A549 (cell line): ENCODE measurements at regions of chr9 and their contacts with region 1.

Region 1: GRCh38 chr9:17810728-17811571 is 232.1 kb downstream of the SH3GL2 start:
- DNase-seq: peak; percentile 17 to 49
- ATAC-seq: peak; percentile 69 to 82; a peak in 4 of 6 replicates
- H3K4me3 ChIP-seq: no peak overlapping the region
- H3K27ac ChIP-seq: no peak overlapping the region
- H3K4me1 ChIP-seq: no peaks in the 10 kb centered on the region
- CTCF ChIP-seq: peak; percentile 93
- EP300 ChIP-seq: no peak
- POLR2A ChIP-seq: no peak
- RAD21 ChIP-seq: peak; percentile 84 to 85

Region 2: DNA sequence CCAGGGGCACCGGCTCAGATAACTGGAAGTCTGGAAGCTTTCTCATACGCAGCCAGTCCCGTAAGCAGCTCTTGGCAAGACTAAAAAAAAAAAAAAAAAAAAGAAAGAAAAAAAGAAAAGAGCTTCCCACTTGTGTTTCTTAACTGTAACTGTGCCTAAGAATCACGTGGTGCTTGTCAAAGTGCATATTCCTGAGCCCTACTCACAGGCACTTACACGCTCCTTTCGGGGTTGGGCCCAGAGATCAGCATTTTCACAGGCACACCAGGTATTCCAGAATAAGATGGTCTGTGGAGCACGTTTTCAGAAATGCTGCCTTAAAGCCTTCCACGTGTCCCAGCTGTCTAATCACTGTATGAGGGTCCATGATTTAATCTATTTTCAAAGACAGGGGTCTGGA is 254.7 kb before region 1 on chr9:
- CTCF ChIA-PET with region 1: no interaction called
- POLR2A ChIA-PET with region 1: no interaction called
- DNase-seq: no peak
- ATAC-seq: no peak
- H3K4me3 ChIP-seq: no peak overlapping the region
- H3K27ac ChIP-seq: no peak overlapping the region
- H3K4me1 ChIP-seq: no peaks in the 10 kb centered on the region
- CTCF ChIP-seq: no peak
- EP300 ChIP-seq: no peak
- POLR2A ChIP-seq: no peak
- RAD21 ChIP-seq: no peak

Region 3: GRCh38 chr9:17772223-17772622 is 38.7 kb before region 1 on chr9:
- CTCF ChIA-PET with region 1: no interaction called
- POLR2A ChIA-PET with region 1: no interaction called
- DNase-seq: no peak
- ATAC-seq: no peak
- H3K4me3 ChIP-seq: no peak overlapping the region
- H3K27ac ChIP-seq: no peak overlapping the region
- H3K4me1 ChIP-seq: no peaks in the 10 kb centered on the region
- CTCF ChIP-seq: no peak
- EP300 ChIP-seq: no peak
- POLR2A ChIP-seq: no peak
- RAD21 ChIP-seq: no peak

Region 4: DNA sequence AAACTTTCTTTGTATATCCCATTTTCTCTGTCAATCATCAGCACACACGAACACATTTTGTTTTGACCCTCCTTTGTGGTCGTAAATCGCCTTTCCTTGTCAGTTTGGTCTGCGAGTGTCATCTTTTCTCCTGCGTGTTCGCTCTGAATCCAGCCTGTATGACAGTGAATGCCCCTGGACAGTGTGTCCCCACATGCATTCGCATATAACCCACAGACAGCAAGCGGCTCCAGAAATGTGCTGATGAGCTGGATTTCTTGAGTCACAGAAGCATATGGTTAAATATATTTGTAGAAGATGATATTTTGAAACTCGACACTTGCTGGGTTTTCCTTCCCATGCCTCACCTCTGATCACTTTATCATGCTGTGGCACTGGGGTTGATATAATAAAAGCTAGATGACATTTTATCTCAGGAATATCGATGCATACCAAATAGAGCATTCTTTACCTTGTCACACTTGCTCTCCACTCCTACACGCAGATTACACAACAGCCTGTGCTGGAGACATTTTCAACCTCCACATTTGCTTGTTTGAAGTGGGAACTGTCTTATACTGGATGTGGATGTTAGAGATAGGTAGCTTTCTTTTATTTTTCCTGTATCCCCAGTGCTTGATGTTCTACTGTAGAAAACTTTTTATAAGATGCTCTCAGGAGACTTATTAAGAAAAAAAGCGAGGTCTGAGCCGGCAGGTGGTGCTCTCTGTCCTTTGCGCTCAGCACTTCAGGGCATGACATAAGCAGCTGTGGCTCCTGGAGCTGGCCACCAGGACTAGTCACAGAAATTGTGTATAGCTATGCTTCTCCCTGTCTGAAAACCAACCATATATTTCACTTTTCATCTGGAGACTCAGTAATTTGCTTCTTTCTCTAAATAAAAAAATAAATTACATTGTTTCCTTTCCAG is 17.0 kb before region 1 on chr9:
- CTCF ChIA-PET with region 1: interaction called, 19 read pairs
- POLR2A ChIA-PET with region 1: no interaction called
- DNase-seq: peak; percentile 13 to 66
- ATAC-seq: peak; percentile 96 to 97
- H3K4me3 ChIP-seq: no peak overlapping the region
- H3K27ac ChIP-seq: no peak overlapping the region
- H3K4me1 ChIP-seq: no peaks in the 10 kb centered on the region
- CTCF ChIP-seq: peak; percentile 43
- EP300 ChIP-seq: no peak
- POLR2A ChIP-seq: no peak
- RAD21 ChIP-seq: peak; percentile 32 to 44; a peak in 4 of 5 replicates

Region 5: GRCh38 chr9:17832812-17833211 is 21.9 kb after region 1 on chr9:
- CTCF ChIA-PET with region 1: interaction called, 21 read pairs
- POLR2A ChIA-PET with region 1: no interaction called
- DNase-seq: no peak
- ATAC-seq: no peak
- H3K4me3 ChIP-seq: no peak overlapping the region
- H3K27ac ChIP-seq: no peak overlapping the region
- H3K4me1 ChIP-seq: no peaks in the 10 kb centered on the region
- CTCF ChIP-seq: no peak
- EP300 ChIP-seq: no peak
- POLR2A ChIP-seq: no peak
- RAD21 ChIP-seq: no peak

Region 6: GRCh38 chr9:17837965-17838364 is 27.0 kb after region 1 on chr9:
- CTCF ChIA-PET with region 1: interaction called, 21 read pairs
- POLR2A ChIA-PET with region 1: no interaction called
- DNase-seq: peak in 1 of 2 experiments; percentile 19
- ATAC-seq: peak in 1 of 2 experiments; percentile 51; a peak in 2 of 6 replicates
- H3K4me3 ChIP-seq: no peak overlapping the region
- H3K27ac ChIP-seq: no peak overlapping the region
- H3K4me1 ChIP-seq: no peaks in the 10 kb centered on the region
- CTCF ChIP-seq: no peak
- EP300 ChIP-seq: no peak
- POLR2A ChIP-seq: no peak
- RAD21 ChIP-seq: no peak

Region 7: GRCh38 chr9:18208154-18209059 is 397.5 kb after region 1 on chr9:
- CTCF ChIA-PET with region 1: interaction called, 53 read pairs
- POLR2A ChIA-PET with region 1: no interaction called
- DNase-seq: peak; percentile 8 to 42
- ATAC-seq: peak; percentile 71 to 75; a peak in 5 of 6 replicates
- H3K4me3 ChIP-seq: no peak overlapping the region
- H3K27ac ChIP-seq: no peak overlapping the region
- H3K4me1 ChIP-seq: no peaks in the 10 kb centered on the region
- CTCF ChIP-seq: peak; percentile 37; the same call in 2 of the 3 replicates
- EP300 ChIP-seq: no peak
- POLR2A ChIP-seq: no peak
- RAD21 ChIP-seq: peak; percentile 37 to 50; a peak in 4 of 5 replicates

Region 8: DNA sequence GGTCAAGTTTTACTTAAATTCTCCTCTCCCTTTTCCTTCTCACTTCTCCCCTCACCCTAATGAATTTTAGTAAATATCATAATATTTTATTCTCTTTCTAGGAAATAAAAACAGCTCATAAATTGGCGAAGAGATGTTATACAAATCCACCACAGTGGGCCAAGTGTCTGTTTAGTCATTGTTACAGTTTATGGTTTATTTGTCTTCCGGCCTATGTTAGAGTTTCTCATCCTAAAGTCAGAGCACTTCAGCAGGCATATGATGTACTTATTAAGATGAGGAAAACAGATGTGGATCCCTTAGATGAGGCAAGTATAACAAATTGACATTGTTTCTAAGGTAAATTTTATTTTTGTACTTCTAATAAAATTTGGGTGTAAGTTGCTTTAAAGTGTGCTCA is 1520.9 kb after region 1 on chr9:
- CTCF ChIA-PET with region 1: no interaction called
- POLR2A ChIA-PET with region 1: no interaction called
- DNase-seq: no peak
- ATAC-seq: no peak
- H3K4me3 ChIP-seq: no peak overlapping the region
- H3K27ac ChIP-seq: no peak overlapping the region
- H3K4me1 ChIP-seq: no peaks in the 10 kb centered on the region
- CTCF ChIP-seq: no peak
- EP300 ChIP-seq: no peak
- POLR2A ChIP-seq: no peak
- RAD21 ChIP-seq: no peak